AG04450 (cell line): ENCODE measurements at regions of chr1 and their contacts with region 1.

Region 1: DNA sequence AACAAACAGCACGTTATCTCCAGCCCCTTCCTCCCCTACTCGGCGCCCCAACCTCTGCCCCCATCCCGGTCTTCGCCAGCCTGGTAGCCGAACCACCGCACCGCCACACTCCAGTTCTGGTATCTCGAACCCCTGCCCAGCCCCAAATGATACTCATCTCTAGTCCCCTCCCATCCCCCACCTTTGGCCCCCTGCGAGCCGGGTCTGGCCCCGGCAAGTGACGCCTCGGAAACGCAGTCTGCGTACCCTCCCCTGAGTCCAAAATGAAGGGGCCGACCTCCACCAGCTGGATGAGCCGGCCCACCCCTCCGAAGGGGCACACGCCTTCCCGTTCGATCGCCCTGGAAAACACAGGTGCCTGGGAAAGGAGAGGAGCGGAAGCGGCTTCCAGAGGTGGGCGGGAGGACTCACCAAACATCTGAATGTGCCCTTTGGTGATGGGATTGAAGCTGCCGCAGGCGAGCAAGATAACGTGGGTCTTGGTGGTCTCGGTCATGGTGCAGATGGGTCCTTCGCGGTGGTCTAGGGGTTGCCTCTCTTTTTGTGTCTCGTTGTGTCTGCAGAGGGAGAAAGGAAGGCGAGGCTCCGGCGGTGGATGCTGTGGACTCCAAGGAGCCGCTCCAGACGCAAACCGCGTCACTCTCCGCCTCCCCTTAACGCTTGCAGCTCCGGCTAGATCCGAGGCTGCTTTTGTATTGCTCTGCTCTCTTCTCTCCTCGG is at the start of gene NMNAT2:
- DNase-seq: no peak
- H3K4me3 ChIP-seq: peak within 1 kb of the TSS; percentile 45
- H3K27ac ChIP-seq: no peak within 1 kb of the TSS
- H3K27me3 ChIP-seq: peaks cover 36% of the 10 kb centered on the region
- CTCF ChIP-seq: no peak
- polyA plus RNA-seq, gene NMNAT2: 0.16 and 0.19 TPM in 2 replicates

Region 2: GRCh38 chr1:182890927-182891610 is 526.9 kb before region 1 on chr1:
- CTCF ChIA-PET with region 1: no interaction called
- POLR2A ChIA-PET with region 1: interaction called, 10 read pairs
- DNase-seq: no peak
- H3K4me3 ChIP-seq: no peak overlapping the region
- H3K27ac ChIP-seq: no peak overlapping the region
- H3K27me3 ChIP-seq: no peaks in the 10 kb centered on the region
- CTCF ChIP-seq: no peak

Region 3: DNA sequence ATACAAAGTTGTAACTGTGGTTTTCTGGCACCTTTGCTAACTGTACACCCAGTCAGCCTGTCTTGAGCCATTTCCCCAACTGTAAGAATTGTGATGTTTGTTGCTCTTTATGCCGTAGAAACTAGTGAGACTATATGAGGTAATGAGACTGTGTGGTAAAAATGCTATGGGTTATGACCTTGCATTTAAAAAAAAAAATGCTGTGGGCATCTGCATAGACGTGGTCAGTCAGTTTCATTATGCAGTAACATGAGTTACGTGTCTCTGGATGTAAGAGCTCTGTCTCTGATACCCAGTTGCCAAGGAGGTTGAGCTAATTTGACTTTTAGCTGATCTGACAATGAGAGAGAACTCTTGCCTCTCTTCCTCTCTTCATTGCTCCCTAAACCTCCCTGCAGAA is 312.5 kb before region 1 on chr1:
- CTCF ChIA-PET with region 1: no interaction called
- POLR2A ChIA-PET with region 1: no interaction called
- DNase-seq: no peak
- H3K4me3 ChIP-seq: no peak overlapping the region
- H3K27ac ChIP-seq: peak overlapping the region; percentile 22
- H3K27me3 ChIP-seq: no peaks in the 10 kb centered on the region
- CTCF ChIP-seq: no peak

Region 4: DNA sequence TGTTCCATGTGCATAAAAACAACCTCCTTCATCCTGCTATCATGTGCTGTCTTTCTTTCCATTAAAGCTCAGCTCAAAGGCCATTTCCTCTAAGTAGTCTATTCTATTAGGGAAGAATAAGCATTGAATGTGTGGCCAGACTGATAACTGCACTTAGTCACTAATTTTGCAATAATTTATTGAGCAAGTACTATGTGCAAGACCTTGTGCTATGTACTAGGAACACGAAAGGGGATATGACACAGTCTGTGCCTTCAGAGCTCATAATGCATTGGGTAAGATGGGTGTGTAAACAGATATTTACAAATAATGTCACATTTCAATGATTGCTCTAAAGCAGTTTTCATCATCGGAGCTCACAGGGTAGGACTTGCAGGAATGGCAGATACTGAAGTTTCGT is 54.0 kb before region 1 on chr1:
- CTCF ChIA-PET with region 1: no interaction called
- POLR2A ChIA-PET with region 1: no interaction called
- DNase-seq: no peak
- H3K4me3 ChIP-seq: no peak overlapping the region
- H3K27ac ChIP-seq: no peak overlapping the region
- H3K27me3 ChIP-seq: peaks cover 33% of the 10 kb centered on the region
- CTCF ChIP-seq: no peak

Region 5: DNA sequence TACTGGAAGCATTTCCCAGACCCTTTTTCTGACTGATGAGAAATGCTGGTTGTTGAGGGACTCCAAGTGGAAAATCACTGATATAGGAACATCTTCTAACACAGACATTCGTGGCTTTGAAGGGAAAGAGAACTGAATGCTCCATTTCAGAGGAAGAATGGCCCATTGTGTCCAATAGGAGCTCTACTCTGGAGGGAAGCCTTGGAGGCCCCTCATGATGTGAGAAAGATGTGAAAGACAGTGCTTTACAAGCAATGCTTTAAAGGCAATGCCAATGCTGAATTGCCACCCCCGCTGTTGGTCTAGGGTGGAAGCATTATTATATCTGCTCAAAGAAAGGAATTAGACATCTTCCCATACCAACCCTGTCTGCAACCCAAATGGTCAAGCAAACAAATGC is 13.5 kb before region 1 on chr1:
- CTCF ChIA-PET with region 1: no interaction called
- POLR2A ChIA-PET with region 1: no interaction called
- DNase-seq: no peak
- H3K4me3 ChIP-seq: no peak overlapping the region
- H3K27ac ChIP-seq: no peak overlapping the region
- H3K27me3 ChIP-seq: peaks cover 19% of the 10 kb centered on the region
- CTCF ChIP-seq: no peak